Activated CD4-positive, alpha-beta memory T cell treated with anti-CD3 and anti-CD28 coated beads for 36 hours (primary cell): ENCODE measurements at regions of chr12 and their contacts with region 1.

Region 1: DNA sequence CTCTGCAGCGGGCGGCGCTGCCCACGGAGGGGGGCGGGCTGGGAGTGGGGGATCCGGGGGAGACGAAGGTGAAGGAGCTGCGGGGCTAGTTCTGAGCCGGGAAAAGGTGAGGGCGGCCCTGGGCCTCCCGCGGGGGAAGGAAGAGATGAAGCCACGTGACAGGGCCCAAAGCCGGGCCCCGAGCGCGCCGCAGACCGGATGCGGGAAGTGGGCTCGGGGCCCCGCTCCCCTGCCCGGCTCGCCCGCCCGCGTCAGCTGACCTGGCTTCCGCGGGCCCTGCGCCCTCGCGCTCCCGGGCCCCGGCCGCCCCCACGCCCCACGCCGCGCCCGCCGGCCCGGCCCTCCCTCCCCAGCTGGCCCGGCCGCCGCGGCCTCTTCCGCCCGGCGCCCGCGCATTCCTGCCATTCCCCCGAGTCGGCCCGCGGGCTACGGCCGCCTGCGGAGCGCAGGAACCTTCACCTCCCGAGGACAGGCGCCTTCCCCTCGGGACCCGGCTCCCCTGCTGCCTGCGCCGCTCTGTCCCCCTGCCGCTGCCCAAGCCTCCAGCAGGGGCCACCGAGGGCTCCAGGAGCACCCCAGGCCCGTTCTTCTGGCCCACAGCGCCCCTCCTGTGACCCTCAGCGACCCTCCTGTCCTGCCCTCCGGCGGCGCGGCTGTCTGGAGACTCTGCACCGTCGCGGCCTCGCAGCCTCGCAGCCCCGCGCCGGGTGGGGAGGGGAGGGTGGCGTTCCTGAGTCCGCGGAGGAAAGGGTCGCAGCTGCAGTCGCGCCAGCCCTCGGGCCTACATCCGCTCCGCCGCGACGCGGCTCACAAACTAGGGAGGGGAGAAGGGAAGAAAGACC is 20.4 kb downstream of the NINJ2 start:
- DNase-seq: peak; percentile 86
- H3K4me3 Mint-ChIP-seq: peak overlapping the region; percentile 74
- H3K27ac Mint-ChIP-seq: peak overlapping the region; percentile 96
- H3K4me1 Mint-ChIP-seq: peaks cover 57% of the 10 kb centered on the region
- H3K27me3 Mint-ChIP-seq: no peaks in the 10 kb centered on the region

Region 2: GRCh38 chr12:614411-614970 is 28.4 kb before region 1 on chr12:
- CTCF ChIA-PET with region 1: interaction called, 3 read pairs
- POLR2A ChIA-PET with region 1: no interaction called
- intact Hi-C with region 1: loop called (anchors 1 kb)
- DNase-seq: peak; percentile 59
- H3K4me3 Mint-ChIP-seq: no peak overlapping the region
- H3K27ac Mint-ChIP-seq: no peak overlapping the region
- H3K4me1 Mint-ChIP-seq: peaks cover 18% of the 10 kb centered on the region
- H3K27me3 Mint-ChIP-seq: no peaks in the 10 kb centered on the region

Region 3: GRCh38 chr12:668090-668481 is 25.2 kb after region 1 on chr12:
- CTCF ChIA-PET with region 1: interaction called, 7 read pairs
- POLR2A ChIA-PET with region 1: interaction called, 7 read pairs
- intact Hi-C with region 1: loop called (anchors 1 kb)
- DNase-seq: no peak
- H3K4me3 Mint-ChIP-seq: no peak overlapping the region
- H3K27ac Mint-ChIP-seq: peak overlapping the region; percentile 85
- H3K4me1 Mint-ChIP-seq: peaks cover 72% of the 10 kb centered on the region
- H3K27me3 Mint-ChIP-seq: peaks cover 6% of the 10 kb centered on the region

Region 4: DNA sequence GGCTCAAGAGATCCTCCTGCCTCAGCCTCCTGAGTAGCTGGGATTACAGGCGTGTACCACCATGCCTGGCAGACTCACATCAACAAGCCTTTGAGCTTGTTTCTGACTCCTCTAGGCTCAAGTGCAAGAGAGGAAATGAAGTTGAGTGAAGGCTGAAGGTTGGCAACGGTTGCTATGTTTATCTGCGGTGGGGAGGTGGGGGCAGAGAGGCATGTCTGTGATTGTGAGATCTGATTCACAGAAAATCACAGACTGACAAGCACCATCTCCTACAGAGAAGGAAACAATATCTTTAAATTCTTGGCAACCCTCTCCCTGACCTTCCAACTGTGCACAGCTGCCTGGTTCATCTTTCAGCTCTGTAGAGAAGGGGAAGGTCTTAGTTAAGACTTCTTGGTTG is 42.5 kb after region 1 on chr12:
- CTCF ChIA-PET with region 1: interaction called, 5 read pairs
- POLR2A ChIA-PET with region 1: interaction called, 6 read pairs
- intact Hi-C with region 1: loop called (anchors 1 kb)
- DNase-seq: peak; percentile 92
- H3K4me3 Mint-ChIP-seq: no peak overlapping the region
- H3K27ac Mint-ChIP-seq: peak overlapping the region; percentile 77
- H3K4me1 Mint-ChIP-seq: peaks cover 36% of the 10 kb centered on the region
- H3K27me3 Mint-ChIP-seq: no peaks in the 10 kb centered on the region